ENCODE measurements at regions of chr1 and their contacts with region 1.

Region 1: DNA sequence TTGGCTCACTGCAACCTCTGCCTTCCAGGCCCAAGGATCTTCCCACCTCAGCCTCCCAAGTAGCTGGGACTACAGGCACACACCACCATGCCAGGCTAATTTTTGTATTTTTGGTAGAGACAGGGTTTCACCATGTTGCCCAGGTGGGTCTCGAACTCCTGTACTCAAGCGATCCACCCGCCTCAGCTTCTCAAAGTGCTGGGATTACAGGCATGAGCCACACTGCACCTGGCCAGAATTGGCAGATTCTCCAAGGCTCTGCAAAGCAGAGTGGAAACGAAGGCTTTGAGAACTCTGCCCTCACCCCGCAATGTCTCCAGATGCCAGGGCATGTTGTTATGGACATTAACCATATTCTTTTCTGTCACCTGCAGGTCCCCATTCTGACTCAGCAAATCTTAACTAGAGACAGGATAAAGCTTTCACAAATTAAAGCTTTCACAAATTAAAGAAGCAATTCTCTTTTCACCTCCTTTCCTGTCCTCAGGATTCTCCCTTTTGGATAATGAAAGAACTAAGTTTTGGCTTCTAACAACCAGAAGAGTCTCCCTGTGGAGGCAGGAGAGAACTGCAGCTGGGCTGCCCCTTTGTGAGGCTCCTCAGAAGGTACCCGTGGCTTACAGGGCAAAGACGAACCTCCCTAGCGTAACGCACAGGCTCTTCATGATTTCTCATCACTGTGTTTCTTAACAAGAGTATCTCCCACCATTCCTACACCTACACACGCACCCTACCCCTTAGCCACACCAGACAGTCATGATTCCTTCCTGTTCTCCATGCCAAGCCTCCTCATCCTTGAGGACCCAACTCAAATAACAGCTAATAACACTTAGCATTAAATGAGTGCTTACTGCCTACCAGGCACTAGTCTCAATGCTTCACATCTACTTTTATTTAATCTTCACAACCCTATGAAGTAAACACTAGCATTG is 29.8 kb downstream of the GPA33 start:
- DNase-seq: no peak
- H3K4me3 ChIP-seq: no peak overlapping the region
- H3K27ac ChIP-seq: no peak overlapping the region
- H3K4me1 ChIP-seq: no peaks in the 10 kb centered on the region
- H3K27me3 ChIP-seq: no peaks in the 10 kb centered on the region
- CTCF ChIP-seq: peak in 1 of 4 experiments; percentile 7
- POLR2A ChIP-seq: no peak

Region 2: DNA sequence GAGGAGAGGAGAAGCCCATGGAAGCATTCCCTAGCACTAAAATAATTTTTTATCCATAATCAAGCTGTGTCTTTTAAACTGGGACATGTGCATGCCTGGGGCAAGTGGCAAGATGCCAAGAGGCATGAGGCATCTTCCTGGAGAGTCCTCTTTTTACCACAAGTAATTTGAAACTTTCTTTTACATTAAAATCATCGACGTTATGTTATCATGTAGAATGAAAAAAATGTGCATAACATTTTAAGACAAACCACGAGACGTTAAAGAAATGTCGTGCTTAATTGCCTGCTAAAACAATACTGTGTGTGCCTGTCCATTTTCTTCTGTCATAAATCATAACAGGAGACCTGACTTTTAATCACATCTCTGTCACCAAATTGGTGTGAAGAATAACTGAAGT is 35.0 kb after region 1 on chr1:
- intact Hi-C with region 1: no loop called
- DNase-seq: no peak
- H3K4me3 ChIP-seq: no peak overlapping the region
- H3K27ac ChIP-seq: no peak overlapping the region
- H3K4me1 ChIP-seq: no peaks in the 10 kb centered on the region
- H3K27me3 ChIP-seq: no peaks in the 10 kb centered on the region
- CTCF ChIP-seq: no peak
- POLR2A ChIP-seq: no peak

Region 3: GRCh38 chr1:167442124-167442848 is 381.9 kb after region 1 on chr1:
- intact Hi-C with region 1: loop called (anchors 5 kb)
- DNase-seq: peak; percentile 73 to 75
- H3K4me3 ChIP-seq: no peak overlapping the region
- H3K27ac ChIP-seq: no peak overlapping the region
- H3K4me1 ChIP-seq: no peaks in the 10 kb centered on the region
- H3K27me3 ChIP-seq: no peaks in the 10 kb centered on the region
- CTCF ChIP-seq: peak; percentile 73 to 85 (median 84)
- POLR2A ChIP-seq: no peak

Region 4: GRCh38 chr1:167803358-167804207 is 743.2 kb after region 1 on chr1:
- intact Hi-C with region 1: no loop called
- DNase-seq: peak; percentile 90 to 92
- H3K4me3 ChIP-seq: no peak overlapping the region
- H3K27ac ChIP-seq: no peak overlapping the region
- H3K4me1 ChIP-seq: no peaks in the 10 kb centered on the region
- H3K27me3 ChIP-seq: no peaks in the 10 kb centered on the region
- CTCF ChIP-seq: peak; percentile 88 to 94 (median 90)
- POLR2A ChIP-seq: no peak